CD14-positive monocyte (primary cell): ENCODE measurements at regions of chr5 and their contacts with region 1.

Region 1: DNA sequence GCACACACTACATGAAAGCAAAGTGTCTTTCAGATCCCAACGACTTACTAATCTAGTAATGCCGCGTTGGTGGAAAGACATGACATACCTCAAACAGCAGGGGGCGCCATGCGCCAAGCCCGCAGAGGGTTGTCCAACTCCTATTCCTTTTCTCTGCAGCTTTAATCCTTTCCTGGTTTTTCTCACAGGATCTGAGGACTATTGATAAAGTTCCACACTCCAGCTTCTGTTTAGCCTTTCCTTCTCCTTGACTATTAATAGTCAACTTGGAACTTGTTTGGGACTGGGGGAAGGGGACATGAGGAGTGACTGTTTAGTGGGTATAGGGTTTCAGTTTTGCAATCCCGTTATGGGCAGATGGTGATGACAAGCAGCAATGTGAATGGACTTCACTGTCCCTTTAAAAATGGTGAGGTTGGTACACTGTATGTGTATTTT is 62.9 kb downstream of the OTULIN start:
- DNase-seq: peak; percentile 58 to 81 (median 63)
- H3K4me3 ChIP-seq: no peak overlapping the region
- H3K4me3 Mint-ChIP-seq: no peak overlapping the region
- H3K27ac ChIP-seq: no peak overlapping the region
- H3K27ac Mint-ChIP-seq: no peak overlapping the region
- H3K4me1 ChIP-seq: peaks cover 20 to 28% of the 10 kb centered on the region in 2 donors
- H3K4me1 Mint-ChIP-seq: peaks cover 28% of the 10 kb centered on the region
- H3K27me3 ChIP-seq: no peaks in the 10 kb centered on the region
- H3K27me3 Mint-ChIP-seq: peaks cover 2 to 3% (median 2%) of the 10 kb centered on the region in 3 donors
- CTCF ChIP-seq: peak; percentile 97

Region 2: DNA sequence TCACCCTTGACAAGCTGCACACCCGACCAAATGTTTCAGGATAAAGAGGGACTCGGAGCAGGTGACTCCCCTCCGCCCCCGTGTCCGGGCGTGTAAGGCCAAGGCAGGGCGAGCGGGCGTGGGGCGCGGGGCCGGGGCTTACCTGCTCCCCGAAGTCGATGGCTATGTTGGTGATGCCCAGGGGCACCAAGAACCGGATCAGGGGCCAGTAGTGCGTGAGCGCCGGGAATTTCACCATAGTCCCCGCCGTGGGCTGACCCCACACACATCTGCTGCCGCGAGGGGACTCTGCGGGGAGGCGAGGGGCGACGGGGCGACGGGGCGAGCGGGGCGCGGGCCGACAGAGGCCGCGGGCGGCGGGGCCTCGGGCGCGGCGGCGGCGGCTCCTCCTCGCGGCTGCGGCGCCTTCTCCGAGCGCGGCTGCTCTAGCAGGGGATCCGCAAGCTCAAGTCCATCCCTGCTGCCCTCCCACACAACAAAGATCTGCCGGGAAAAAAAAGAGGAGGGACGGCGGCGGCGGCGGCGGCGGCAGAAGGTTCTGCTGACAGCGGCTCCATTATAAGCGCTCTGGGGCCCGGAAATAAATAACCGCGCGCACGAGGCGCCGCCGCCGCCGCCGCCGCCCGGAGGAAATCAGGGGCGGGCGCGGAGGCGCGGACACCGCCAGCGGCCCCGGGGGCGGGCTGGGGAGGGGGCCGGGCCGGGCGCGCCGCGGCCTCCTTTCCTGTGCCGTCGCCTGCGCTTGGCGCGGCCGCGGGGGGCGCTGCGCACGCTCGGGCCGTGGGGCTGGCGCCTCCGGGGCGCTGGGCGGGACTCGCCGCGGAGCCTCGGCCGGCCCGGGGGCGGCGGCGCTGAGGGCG is 144.0 kb after region 1 on chr5 and contains the start of gene ANKH:
- intact Hi-C with region 1: loop called (anchors 1 to 10 kb)
- DNase-seq: peak; percentile 54 to 68 (median 66)
- H3K4me3 ChIP-seq: peak within 1 kb of the TSS; percentile 52 to 84 (median 73)
- H3K4me3 Mint-ChIP-seq: peak within 1 kb of the TSS; percentile 84 to 88
- H3K27ac ChIP-seq: peak within 1 kb of the TSS; percentile 55 to 61
- H3K27ac Mint-ChIP-seq: peak within 1 kb of the TSS in 6 of 7 donors; percentile 40 to 83 (median 78)
- H3K4me1 ChIP-seq: peaks cover 24 to 26% of the 10 kb centered on the region in 2 donors
- H3K4me1 Mint-ChIP-seq: peaks cover 22% of the 10 kb centered on the region
- H3K27me3 ChIP-seq: peaks cover 39 to 63% of the 10 kb centered on the region in 2 donors
- H3K27me3 Mint-ChIP-seq: peaks cover 49 to 56% (median 54%) of the 10 kb centered on the region in 3 donors
- CTCF ChIP-seq: no peak
- polyA plus RNA-seq, gene ANKH: 2.4 to 6.3 (median 3.1) TPM